ENCODE measurements at regions of chr19 and their contacts with region 1.

Region 1: GRCh38 chr19:16441661-16442162 is 30.1 kb downstream of the EPS15L1 start:
- DNase-seq: peak in 1 of 2 experiments; percentile 78
- H3K4me3 ChIP-seq: no peak overlapping the region
- H3K27ac ChIP-seq: no peak overlapping the region
- H3K4me1 ChIP-seq: peaks cover 0 to 8% (median 2%) of the 10 kb centered on the region in 4 experiments; a peak in 4 of 7 replicates
- H3K27me3 ChIP-seq: no peaks in the 10 kb centered on the region
- CTCF ChIP-seq: peak; percentile 65 to 89 (median 86)
- EP300 ChIP-seq: no peak
- POLR2A ChIP-seq: no peak
- RAD21 ChIP-seq: peak; percentile 71 to 79

Region 2: GRCh38 chr19:16078772-16079645 is 362.7 kb before region 1 on chr19:
- CTCF ChIA-PET with region 1: no interaction called
- POLR2A ChIA-PET with region 1: no interaction called
- DNase-seq: no peak
- H3K4me3 ChIP-seq: peak overlapping the region; percentile 33 to 99 (median 92); a peak in 5 of 8 replicates
- H3K27ac ChIP-seq: peak overlapping the region; percentile 81
- H3K4me1 ChIP-seq: peaks cover 0 to 8% (median 7%) of the 10 kb centered on the region in 4 experiments; a peak in 5 of 7 replicates
- H3K27me3 ChIP-seq: no peaks in the 10 kb centered on the region
- CTCF ChIP-seq: no peak
- EP300 ChIP-seq: no peak
- POLR2A ChIP-seq: peak in 1 of 2 experiments; percentile 75; a peak in 2 of 3 replicates
- RAD21 ChIP-seq: no peak

Region 3: GRCh38 chr19:16423891-16424290 is 17.8 kb before region 1 on chr19:
- CTCF ChIA-PET with region 1: interaction called, 26 read pairs
- POLR2A ChIA-PET with region 1: interaction called, 3 read pairs
- DNase-seq: no peak
- H3K4me3 ChIP-seq: no peak overlapping the region
- H3K27ac ChIP-seq: no peak overlapping the region
- H3K4me1 ChIP-seq: peaks cover 0 to 4% (median 0%) of the 10 kb centered on the region in 4 experiments; a peak in 2 of 7 replicates
- H3K27me3 ChIP-seq: no peaks in the 10 kb centered on the region
- CTCF ChIP-seq: no peak
- EP300 ChIP-seq: no peak
- POLR2A ChIP-seq: no peak
- RAD21 ChIP-seq: no peak

Region 4: DNA sequence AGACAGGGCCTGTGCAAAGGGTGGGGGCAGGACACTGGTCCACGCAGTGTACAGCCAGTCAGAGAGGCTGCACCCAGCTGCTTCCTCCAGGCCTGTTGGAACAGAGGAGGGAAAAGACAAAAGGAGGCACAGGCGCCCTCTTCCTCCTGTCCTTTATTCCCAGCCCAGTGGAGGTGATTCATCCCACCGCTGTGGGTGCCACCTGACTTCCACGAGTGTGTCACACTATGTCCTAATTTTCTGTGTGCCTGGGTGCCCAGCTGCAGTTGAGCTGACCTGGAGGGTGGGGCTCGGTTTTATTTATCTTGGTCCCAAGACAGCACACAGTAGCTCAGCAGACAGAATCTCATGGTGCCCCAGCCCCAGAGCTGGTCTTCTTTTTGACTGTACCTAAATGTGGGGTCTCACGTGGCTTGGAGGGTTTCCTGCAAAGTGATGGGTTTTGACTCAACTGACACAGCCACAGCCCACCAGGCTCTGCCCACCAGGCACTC is 21.1 kb after region 1 on chr19:
- CTCF ChIA-PET with region 1: interaction called, 66 read pairs
- POLR2A ChIA-PET with region 1: interaction called, 3 read pairs
- DNase-seq: no peak
- H3K4me3 ChIP-seq: no peak overlapping the region
- H3K27ac ChIP-seq: no peak overlapping the region
- H3K4me1 ChIP-seq: peaks cover 2 to 18% (median 7%) of the 10 kb centered on the region in 4 experiments
- H3K27me3 ChIP-seq: no peaks in the 10 kb centered on the region
- CTCF ChIP-seq: no peak
- EP300 ChIP-seq: no peak
- POLR2A ChIP-seq: no peak
- RAD21 ChIP-seq: no peak

Region 5: DNA sequence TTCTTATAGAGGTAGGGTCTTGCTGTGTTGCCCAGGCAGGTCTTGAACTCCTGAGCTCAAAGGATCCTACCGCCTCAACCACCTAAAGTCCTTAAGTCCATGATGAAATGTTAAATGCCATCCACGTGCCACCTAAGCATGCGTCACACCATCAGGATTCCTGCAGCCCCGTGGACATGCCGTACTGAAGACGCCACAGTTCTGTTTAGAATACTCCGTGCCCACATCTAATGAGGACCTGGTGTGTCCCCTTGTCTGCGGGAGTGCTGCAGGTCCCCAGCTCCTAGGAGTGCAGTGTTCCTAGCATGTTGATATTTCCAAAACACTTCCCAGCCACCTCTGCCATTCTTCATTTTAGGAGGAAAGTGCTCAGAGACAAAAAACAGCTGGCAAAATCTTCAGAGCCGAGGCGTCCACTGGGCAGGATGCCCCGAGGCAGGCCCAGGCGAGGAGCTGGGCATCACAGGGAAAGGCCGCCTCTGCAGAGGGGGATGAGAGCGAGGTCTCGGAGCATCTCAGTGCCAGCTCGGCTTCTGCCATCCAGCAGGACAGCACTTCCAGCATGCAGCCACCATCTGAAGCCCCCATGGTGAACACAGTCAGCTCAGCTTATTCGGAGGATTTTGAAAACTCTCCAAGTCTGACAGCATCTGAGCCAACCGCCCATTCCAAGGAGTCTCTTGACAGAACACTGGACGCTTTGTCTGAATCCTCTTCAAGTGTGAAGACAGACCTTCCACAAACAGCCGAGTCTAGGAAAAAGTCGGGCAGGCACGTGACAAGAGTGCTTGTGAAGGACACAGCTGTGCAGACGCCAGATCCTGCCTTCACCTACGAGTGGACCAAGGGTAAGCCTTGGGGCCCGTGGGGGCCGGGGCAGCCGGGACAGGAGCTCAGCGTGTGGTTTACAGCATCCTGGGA is 67.7 kb after region 1 on chr19:
- CTCF ChIA-PET with region 1: interaction called, 67 read pairs
- POLR2A ChIA-PET with region 1: no interaction called
- DNase-seq: no peak
- H3K4me3 ChIP-seq: no peak overlapping the region
- H3K27ac ChIP-seq: no peak overlapping the region
- H3K4me1 ChIP-seq: no peaks in the 10 kb centered on the region
- H3K27me3 ChIP-seq: no peaks in the 10 kb centered on the region
- CTCF ChIP-seq: no peak
- EP300 ChIP-seq: no peak
- POLR2A ChIP-seq: no peak
- RAD21 ChIP-seq: no peak

Measured in H1 (cell line).